ENCODE measurements at regions of chr21 and their contacts with region 1.

Region 1: DNA sequence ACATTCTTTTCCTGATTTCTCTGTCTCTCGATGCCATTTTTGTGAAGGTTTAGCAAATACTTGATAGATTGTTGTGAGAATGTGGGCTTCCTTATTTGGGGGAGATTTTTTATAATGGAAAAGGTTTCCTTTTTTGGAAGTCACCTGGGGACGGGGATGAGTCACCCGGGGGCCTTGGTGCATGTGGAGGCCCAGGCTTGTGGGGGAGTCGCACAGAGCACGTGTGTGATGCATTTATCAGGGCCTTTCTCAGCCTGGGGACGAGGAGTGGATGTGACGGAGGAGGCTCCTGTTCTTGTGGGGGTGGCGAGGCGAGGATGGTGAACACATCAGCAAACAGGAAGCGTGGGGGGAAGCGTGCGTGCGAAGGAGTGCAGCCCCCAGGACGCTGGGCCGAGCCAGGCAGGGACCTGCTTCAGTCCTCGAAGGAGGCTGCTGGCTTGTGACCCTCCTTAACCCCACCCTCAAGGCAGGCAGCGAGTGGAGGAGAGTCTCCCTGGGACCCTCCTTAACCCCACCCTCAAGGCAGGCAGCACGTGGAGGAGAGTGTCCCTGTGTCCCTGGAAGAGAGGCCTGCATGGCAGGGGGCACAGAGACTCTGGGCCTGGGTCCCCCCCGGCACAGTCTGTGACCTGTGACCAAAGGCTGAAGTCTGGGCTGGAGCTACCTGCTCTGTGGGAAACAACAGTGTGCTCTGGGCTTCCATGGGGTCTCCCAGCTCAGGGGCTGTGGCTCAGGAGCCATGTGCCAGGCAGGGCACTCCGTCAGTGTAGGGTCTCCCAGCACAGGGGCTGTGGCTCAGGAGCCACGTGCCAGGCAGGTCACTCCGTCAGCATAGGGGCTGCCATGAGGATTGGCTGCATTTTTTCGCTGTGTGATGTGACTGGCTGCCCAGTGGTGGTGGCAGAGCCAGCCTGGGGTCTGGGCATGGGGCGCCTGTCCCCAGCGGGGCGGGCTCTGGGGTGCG is 57.2 kb downstream of the AGPAT3 start:
- DNase-seq: peak; percentile 37 to 93 (median 73)

Region 2: GRCh38 chr21:43866260-43866629 is 56.0 kb before region 1 on chr21:
- intact Hi-C with region 1: loop called (anchors 5 kb)
- DNase-seq: peak in 30 of 42 donors; percentile 30 to 75 (median 46)